Right ventricle myocardium inferior (tissue), 1 donor: ENCODE measurements at regions of chr11 and their contacts with region 1.

Region 1: DNA sequence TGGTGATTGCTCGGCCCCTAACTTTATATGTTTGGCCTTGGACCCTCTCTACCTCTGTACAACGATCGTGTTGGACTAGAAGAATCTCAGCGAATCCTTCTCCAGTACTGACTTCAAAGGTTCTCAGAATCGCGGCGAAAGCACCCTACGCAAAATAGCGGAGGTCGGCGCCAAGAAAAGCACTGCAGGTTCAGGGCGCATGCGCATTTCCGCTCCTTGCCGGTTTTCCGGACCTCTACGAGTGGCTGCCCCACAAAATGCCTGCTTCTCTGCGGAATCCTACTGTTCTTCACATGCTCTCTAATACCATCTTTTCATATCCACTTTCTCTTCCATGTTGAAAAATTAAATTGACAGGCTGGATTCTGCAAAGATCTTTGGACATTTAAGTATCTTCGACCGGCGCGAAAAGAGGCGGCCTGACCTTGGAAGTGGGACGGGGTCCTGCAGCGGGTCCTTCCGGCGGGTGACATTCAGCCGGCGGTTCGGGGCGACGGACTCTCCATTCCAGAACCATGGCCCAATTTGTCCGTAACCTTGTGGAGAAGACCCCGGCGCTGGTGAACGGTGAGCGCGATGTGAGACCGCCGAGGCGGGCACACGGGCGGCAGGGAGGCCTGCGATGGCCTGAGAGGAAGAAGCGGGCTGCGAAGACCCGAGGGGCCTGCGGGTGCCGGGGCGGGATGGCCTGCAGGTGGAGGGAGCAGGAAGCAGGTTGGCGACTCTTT is at the start of gene ATP5MG:
- DNase-seq: peak; percentile 94
- ATAC-seq: peak; percentile 88
- total RNA-seq, gene ATP5MG: 762 TPM

Region 2: GRCh38 chr11:118353084-118353710 is 48.1 kb before region 1 on chr11:
- intact Hi-C with region 1: no loop called
- DNase-seq: no peak
- ATAC-seq: no peak

Region 3: DNA sequence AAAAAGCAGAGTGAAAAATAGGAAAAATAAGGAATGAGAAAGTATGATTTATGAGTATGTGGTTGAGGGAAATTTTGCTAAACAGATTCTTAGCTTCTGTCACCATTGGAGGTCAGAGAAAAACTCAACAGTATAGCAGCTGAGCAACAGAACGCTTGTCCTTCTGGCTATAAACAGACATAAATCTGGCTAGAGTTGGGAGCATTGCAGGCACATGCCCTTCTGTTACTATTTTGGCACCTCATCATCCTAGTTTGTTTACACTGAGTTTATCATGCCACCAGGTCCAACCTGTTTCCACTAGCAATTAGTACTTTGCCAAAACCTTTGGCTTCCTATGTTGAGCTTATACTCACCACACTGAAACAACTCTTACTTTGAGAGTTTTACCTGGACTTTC is 35.0 kb before region 1 on chr11:
- intact Hi-C with region 1: loop called (anchors 5 kb)
- DNase-seq: no peak
- ATAC-seq: peak; percentile 90

Region 4: GRCh38 chr11:118435893-118436624 is 34.7 kb after region 1 on chr11 and contains the start of gene KMT2A:
- intact Hi-C with region 1: loop called (anchors 1 kb)
- DNase-seq: peak; percentile 98
- ATAC-seq: peak; percentile 95
- total RNA-seq, gene KMT2A: 24.3 TPM

Region 5: DNA sequence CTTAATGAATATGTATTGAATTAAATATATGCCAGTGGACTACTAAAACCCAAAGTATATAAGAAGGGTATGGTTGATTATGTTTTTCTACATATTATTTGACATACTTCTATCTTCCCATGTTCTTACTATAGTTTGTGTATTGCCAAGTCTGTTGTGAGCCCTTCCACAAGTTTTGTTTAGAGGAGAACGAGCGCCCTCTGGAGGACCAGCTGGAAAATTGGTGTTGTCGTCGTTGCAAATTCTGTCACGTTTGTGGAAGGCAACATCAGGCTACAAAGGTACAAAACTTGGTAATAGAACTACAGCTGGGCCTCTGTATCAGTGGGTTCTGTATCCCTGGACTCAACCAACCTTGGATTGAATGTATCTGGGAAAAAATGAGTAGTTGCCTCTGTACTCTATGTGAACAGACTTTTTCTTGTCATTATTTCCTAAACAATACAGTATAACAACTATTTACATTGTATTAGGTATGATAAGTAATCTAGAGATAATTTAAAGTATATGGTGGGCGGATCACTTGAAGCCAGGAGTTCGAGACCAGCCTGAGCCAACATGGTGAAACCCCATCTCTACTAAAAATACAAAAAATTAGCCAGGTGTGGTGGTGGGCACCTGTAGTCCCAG is 87.3 kb after region 1 on chr11:
- intact Hi-C with region 1: loop called (anchors 2 kb)
- DNase-seq: no peak
- ATAC-seq: no peak

Region 6: DNA sequence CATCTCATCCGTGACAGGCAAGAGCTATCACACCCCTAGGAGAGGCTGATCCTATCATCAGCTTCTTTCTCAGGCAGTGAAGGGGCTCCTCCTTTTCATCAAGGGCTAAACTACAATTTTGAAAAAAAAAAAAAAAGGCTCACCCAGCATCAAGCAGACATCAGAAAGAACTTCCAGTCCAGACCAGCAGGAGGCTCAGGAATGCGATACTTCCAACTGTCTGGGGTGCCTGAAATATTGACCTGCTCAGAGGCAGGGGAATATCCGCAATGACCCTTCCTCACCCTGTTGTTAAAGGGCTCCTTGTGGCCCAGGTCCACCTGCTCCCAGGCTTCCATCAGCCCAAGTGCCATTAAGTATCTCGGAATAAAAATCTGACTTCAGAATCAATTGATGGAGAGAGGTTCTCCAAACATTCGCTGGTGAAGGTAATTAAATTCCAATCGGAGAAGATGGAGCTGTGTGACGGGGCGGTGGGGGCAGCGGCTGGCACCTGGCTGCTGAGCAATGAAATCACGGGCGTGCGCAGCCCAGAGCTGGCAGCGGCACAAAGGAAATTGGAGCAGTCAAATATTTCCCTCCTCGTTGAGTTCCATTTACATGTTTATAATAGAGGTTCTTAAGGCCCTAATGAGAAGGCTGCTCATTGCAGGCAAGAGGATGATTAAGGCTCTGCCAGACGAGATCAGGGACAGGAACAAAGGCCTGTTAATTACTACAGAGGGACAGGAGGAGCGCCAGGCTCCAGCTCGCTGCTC is 1090.6 kb after region 1 on chr11:
- intact Hi-C with region 1: no loop called
- DNase-seq: no peak
- ATAC-seq: no peak